A673 (cell line): ENCODE measurements at regions of chr2 and their contacts with region 1.

Region 1: DNA sequence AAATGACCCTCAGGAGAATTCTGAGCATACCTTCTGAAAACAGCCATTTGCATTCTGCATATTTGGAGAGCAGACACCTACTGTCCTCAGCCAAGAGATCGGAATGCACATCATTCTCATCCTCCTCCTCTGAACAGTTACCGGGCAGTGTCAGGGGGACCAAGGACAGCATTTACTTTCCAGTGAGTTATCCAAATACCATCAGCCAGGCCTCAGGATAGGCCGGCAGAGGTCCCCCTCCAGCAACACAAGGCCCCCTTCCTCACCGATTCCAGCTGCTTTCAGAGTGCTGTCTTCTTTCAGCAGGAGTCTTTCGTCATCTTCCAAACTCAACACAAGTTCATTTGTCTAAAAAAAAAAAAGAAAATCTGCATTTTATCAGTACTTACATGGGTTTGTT is 55.3 kb downstream of the C2orf76 start:
- DNase-seq: peak; percentile 21
- H3K4me3 ChIP-seq: no peak overlapping the region
- H3K27ac ChIP-seq: no peak overlapping the region
- H3K4me1 ChIP-seq: no peaks in the 10 kb centered on the region
- H3K27me3 ChIP-seq: no peaks in the 10 kb centered on the region
- CTCF ChIP-seq: 0 out of 2 replicates have a peak, but pooled peaks have one; percentile 12

Region 2: DNA sequence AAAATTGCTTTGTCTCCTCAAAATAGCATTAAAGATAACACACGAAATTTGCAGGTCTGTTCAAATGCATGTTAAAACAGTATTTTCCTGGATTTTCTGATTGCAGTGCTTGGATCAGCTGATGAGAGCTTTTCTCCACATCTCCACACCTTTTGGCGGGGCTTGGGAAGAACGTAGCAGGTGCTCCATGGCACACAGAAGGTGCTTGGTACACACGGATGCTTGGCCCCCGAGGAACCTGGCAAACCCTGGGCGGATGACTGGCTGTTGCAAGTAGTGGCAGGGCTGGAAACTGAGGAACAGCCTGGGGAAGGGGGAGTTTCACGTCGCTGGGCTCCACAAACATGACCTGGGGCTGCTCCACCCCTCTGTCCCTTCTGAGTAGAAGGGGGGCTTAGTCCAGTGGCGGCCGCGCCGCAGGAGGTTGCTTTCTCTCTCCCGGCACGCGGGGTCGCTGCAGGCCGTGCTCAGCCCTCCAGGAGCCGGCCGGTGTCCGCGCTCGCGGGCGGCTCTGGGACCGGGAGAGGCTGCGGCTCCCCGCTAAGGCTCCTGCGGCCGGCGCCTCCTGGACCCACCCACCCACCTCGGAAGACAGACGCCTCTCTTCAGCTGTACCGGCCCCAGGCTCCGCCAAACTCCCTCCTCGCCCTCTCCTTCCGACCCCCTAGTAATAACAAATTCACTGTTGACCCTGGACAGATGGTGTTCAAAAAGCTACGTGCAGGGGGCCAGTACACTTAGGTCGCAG is 300.0 kb before region 1 on chr2:
- CTCF ChIA-PET with region 1: no interaction called
- POLR2A ChIA-PET with region 1: no interaction called
- intact Hi-C with region 1: loop called (anchors 5 kb)
- DNase-seq: peak; percentile 51
- H3K4me3 ChIP-seq: no peak overlapping the region
- H3K27ac ChIP-seq: no peak overlapping the region
- H3K4me1 ChIP-seq: peaks cover 10% of the 10 kb centered on the region
- H3K27me3 ChIP-seq: peaks cover 31% of the 10 kb centered on the region
- CTCF ChIP-seq: peak; percentile 57

Region 3: DNA sequence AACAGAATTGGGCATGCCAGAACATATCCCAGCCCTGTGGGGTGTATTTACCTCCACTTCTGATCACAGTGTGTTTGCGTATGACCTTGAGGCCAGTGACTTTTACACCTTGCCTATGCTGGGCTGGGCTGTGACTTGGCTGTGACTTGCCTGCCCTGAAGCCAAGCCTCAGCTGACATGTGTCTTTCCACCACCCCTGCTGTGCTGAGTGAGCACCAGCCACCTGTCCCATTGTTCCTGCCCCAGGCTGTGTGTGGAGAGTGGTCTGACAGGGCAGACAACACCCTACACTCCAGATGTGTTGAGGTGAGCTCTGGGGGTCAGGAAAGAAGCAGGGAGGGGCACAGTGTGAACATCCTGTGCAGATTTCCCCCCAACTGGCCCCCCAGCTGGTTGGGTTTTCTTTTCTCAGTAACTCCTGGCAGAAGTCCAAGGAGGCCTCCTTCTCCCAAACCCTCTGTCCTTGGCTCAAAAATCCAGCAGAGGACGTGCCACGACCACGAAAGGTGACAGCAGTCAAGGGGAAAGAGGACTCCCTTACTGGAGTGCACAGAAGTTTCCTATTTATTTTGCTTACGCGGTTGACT is 92.8 kb before region 1 on chr2:
- CTCF ChIA-PET with region 1: interaction called, 15 read pairs
- POLR2A ChIA-PET with region 1: no interaction called
- intact Hi-C with region 1: no loop called
- DNase-seq: peak; percentile 81
- H3K4me3 ChIP-seq: no peak overlapping the region
- H3K27ac ChIP-seq: no peak overlapping the region
- H3K4me1 ChIP-seq: peaks cover 7% of the 10 kb centered on the region
- H3K27me3 ChIP-seq: no peaks in the 10 kb centered on the region
- CTCF ChIP-seq: peak; percentile 50

Region 4: GRCh38 chr2:119359774-119360173 is 48.4 kb after region 1 on chr2:
- CTCF ChIA-PET with region 1: no interaction called
- POLR2A ChIA-PET with region 1: no interaction called
- intact Hi-C with region 1: loop called (anchors 5 kb)
- DNase-seq: no peak
- H3K4me3 ChIP-seq: no peak overlapping the region
- H3K27ac ChIP-seq: no peak overlapping the region
- H3K4me1 ChIP-seq: no peaks in the 10 kb centered on the region
- H3K27me3 ChIP-seq: no peaks in the 10 kb centered on the region
- CTCF ChIP-seq: no peak

Region 5: GRCh38 chr2:119659601-119660342 is 348.4 kb after region 1 on chr2:
- CTCF ChIA-PET with region 1: no interaction called
- POLR2A ChIA-PET with region 1: no interaction called
- intact Hi-C with region 1: loop called (anchors 10 kb)
- DNase-seq: peak; percentile 54
- H3K4me3 ChIP-seq: no peak overlapping the region
- H3K27ac ChIP-seq: no peak overlapping the region
- H3K4me1 ChIP-seq: no peaks in the 10 kb centered on the region
- H3K27me3 ChIP-seq: no peaks in the 10 kb centered on the region
- CTCF ChIP-seq: peak; percentile 92